CD4-positive, alpha-beta memory T cell (primary cell): ENCODE measurements at regions of chrX and their contacts with region 1.

Region 1: DNA sequence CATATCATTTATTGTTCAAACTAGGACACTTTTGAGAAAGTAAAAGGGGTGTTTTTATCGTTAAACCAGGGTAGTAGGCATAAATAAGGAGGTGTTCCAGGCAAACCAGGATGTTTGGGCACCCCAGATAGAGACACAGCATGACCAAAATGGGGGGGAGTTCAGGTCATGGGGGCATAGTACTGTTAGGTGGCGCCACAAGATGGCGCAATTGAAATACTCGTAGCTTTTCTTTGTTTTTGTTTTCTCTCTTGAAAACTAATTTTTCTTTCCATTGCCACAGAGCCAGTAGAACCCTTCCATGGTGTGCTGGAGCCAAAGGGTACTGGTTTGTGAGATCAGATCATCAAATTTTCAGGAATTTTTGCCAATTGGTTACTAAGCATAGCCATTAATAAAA is 283.4 kb downstream of the BCOR start:
- DNase-seq: peak; percentile 40 to 47 (median 46)
- H3K4me3 ChIP-seq: no peak overlapping the region
- H3K4me3 Mint-ChIP-seq: peak overlapping the region in 1 of 8 donors; percentile 47
- H3K27ac ChIP-seq: no peak overlapping the region
- H3K27ac Mint-ChIP-seq: peak overlapping the region in 1 of 7 donors; percentile 37
- H3K4me1 ChIP-seq: peaks cover 13% of the 10 kb centered on the region
- H3K4me1 Mint-ChIP-seq: peaks cover 5 to 27% (median 10%) of the 10 kb centered on the region in 4 donors
- H3K27me3 ChIP-seq: no peaks in the 10 kb centered on the region
- H3K27me3 Mint-ChIP-seq: no peaks in the 10 kb centered on the region

Region 2: DNA sequence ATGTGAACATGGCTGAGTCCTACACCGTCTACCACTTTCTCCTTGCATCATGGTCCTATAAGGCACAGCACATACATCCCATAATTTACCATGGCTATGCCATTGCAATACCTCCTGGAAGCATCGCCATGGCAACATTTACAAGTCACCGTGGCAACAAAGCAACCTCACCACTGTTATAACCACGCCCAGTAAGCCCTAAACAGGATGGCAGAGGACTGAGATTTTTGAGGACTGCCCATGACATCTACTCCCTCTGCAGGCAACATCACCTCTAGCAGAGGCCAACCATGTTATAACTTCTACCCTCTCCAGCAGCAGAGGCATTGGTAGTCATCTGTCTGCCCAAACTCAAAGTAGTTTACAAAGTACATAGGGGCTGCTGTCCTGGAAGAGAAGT is 253.7 kb after region 1 on chrX:
- CTCF ChIA-PET with region 1: no interaction called
- POLR2A ChIA-PET with region 1: no interaction called
- intact Hi-C with region 1: loop called (anchors 1 kb)
- DNase-seq: peak in 4 of 5 donors; percentile 25 to 46 (median 38)
- H3K4me3 ChIP-seq: no peak overlapping the region
- H3K4me3 Mint-ChIP-seq: no peak overlapping the region
- H3K27ac ChIP-seq: no peak overlapping the region
- H3K27ac Mint-ChIP-seq: peak overlapping the region; percentile 2 to 86 (median 64)
- H3K4me1 ChIP-seq: peaks cover 49% of the 10 kb centered on the region
- H3K4me1 Mint-ChIP-seq: peaks cover 27 to 54% (median 43%) of the 10 kb centered on the region in 4 donors
- H3K27me3 ChIP-seq: no peaks in the 10 kb centered on the region
- H3K27me3 Mint-ChIP-seq: no peaks in the 10 kb centered on the region

Region 3: DNA sequence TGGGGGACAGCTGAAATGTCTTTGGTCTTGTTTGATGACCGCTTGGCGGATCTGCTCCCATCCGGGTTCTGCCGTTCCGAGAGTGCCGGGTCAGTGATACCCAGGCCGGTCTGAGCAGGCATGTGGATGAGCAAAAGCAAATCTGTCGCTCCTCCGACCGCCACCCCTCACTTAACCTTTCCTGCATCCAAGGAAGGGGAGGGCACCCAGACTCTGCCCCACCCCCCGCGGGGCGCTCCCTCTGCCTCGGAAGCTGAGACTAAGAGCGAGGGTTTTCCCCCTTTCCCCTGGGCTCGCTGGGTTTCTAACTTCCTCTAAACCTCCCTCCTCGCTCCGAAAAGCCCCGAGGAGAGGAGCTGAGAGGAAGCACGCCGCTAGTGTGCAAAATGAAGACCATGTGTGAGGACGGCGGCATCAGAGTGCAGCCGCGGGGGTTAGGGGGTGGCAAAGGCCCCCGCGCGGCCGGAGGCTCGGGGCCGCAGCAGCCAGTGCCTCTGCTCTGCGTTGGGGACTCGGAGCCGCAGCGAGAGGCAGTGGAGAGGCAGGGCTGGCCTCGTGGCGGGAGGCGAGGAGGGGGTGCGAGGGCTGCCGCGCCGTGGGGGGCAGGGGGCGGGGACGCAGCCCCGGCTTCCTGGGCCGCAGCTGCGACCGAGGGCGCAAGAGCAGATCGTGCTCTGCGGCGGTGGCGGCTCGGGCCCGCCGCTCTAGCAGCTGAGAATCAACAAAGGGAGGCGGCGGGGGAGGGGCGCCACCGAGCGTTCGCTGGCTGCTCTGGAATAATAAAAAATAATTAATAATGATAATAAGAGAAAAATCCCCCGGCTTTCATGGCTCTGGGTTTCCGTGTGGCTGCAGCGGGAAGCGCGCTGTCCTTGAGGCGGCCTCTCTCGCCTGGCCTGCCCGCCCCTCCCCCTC is 339.2 kb after region 1 on chrX:
- CTCF ChIA-PET with region 1: interaction called, 3 read pairs
- POLR2A ChIA-PET with region 1: interaction called, 5 read pairs
- intact Hi-C with region 1: loop called (anchors 5 kb)
- DNase-seq: peak in 4 of 5 donors; percentile 44 to 83 (median 54)
- H3K4me3 ChIP-seq: peak overlapping the region; percentile 3 to 50
- H3K4me3 Mint-ChIP-seq: peak overlapping the region; percentile 81 to 92 (median 84)
- H3K27ac ChIP-seq: no peak overlapping the region
- H3K27ac Mint-ChIP-seq: peak overlapping the region; percentile 12 to 79 (median 60)
- H3K4me1 ChIP-seq: peaks cover under 1% of the 10 kb centered on the region
- H3K4me1 Mint-ChIP-seq: peaks cover 1 to 18% (median 11%) of the 10 kb centered on the region in 4 donors
- H3K27me3 ChIP-seq: no peaks in the 10 kb centered on the region
- H3K27me3 Mint-ChIP-seq: no peaks in the 10 kb centered on the region

Region 4: DNA sequence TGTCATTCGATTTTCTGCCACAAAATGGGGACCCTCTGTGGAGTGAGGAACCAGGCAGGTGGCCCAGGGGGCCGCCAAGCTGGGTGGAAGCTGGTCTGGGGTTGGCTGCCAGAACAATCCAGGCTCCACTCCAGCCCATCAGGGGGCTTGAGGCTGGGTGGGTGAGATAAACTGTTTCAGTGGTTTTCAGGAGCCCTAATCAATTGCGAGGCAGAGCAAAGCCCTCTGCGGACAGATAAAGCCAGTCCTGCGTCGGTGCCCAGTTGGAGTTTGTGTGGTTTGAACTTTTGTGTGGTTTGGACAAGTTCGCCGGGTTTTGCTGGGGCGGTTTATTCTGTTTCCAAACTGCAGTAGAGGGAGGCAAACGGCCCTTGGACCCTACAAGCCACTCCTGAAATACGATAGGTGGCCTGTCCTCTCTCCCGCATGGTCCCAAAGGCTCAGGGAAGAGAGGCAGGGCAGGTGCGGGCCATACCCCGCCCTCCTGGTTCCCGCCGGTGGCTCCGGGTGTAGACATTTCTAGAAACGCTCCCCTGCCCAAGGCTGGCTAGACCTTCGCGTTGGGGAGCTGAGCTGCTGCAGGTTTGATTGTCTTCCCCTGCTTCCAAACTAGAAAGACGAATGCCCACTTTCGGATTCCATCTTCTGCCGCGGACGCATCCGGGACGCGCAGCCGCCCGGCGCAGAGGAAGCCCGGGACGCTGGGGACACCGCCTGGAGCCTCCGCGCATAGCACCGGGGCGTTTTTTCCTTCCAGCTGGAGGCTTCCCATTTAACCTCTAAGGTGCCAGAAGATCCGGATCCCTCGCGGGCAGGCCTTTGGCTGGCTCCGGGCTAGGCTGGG is 452.3 kb after region 1 on chrX:
- CTCF ChIA-PET with region 1: interaction called, 7 read pairs
- POLR2A ChIA-PET with region 1: interaction called, 3 read pairs
- intact Hi-C with region 1: loop called (anchors 1 kb)
- DNase-seq: peak; percentile 35 to 47 (median 40)
- H3K4me3 ChIP-seq: peak overlapping the region; percentile 36 to 57
- H3K4me3 Mint-ChIP-seq: peak overlapping the region; percentile 74 to 87 (median 82)
- H3K27ac ChIP-seq: no peak overlapping the region
- H3K27ac Mint-ChIP-seq: peak overlapping the region in 3 of 7 donors; percentile 27 to 82 (median 63)
- H3K4me1 ChIP-seq: peaks cover 10% of the 10 kb centered on the region
- H3K4me1 Mint-ChIP-seq: peaks cover 0 to 16% (median 3%) of the 10 kb centered on the region in 4 donors
- H3K27me3 ChIP-seq: no peaks in the 10 kb centered on the region
- H3K27me3 Mint-ChIP-seq: no peaks in the 10 kb centered on the region

Region 5: GRCh38 chrX:40468033-40468846 is 653.8 kb after region 1 on chrX:
- CTCF ChIA-PET with region 1: no interaction called
- POLR2A ChIA-PET with region 1: no interaction called
- intact Hi-C with region 1: loop called (anchors 10 kb)
- DNase-seq: peak in 4 of 5 donors; percentile 21 to 37 (median 23)
- H3K4me3 ChIP-seq: no peak overlapping the region
- H3K4me3 Mint-ChIP-seq: peak overlapping the region in 2 of 8 donors; percentile 15 to 45
- H3K27ac ChIP-seq: no peak overlapping the region
- H3K27ac Mint-ChIP-seq: peak overlapping the region in 2 of 7 donors; percentile 25 to 65
- H3K4me1 ChIP-seq: peaks cover 26% of the 10 kb centered on the region
- H3K4me1 Mint-ChIP-seq: peaks cover 16 to 34% (median 24%) of the 10 kb centered on the region in 4 donors
- H3K27me3 ChIP-seq: no peaks in the 10 kb centered on the region
- H3K27me3 Mint-ChIP-seq: peaks cover 0 to 2% of the 10 kb centered on the region in 2 donors